Naive thymus-derived CD4-positive, alpha-beta T cell (primary cell): ENCODE measurements at regions of chr3 and their contacts with region 1.

Region 1: DNA sequence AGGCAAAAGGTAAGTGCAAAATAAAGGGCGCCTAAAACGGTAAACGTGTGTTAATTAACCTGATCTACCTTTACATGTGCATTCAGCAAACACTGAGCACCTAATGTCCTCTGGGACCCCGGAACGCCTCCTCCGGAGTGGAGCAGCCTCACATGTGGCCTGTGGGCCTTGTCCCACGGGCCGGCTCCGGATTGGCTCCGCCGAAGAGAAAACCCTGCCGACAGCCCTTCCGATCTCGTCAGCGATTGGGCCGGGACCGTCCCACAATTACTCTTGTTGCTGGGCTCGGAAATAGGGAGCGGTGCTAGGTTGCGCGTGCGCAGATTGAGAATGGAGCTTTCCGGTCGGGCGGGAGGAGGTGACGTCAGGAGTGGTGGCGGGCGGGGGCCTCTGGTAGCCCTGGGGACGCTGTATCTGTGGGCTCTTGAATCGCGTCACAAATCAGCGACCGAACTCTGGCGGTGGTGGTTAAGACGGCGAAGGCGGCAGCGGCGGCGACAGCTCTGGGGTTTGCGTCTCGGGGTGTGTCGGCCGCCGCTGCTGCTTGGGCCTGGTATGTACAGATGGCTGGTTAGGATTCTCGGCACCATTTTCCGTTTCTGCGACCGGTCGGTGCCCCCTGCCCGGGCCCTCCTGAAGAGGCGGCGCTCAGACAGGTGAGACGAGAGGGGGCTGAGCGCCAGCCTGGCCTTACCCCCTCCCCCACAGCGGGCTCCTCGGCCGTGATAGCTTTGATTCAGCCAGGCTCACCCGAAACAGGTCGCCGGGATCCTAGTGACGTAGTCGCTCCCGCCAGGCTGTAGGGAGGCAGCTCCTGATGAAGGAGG is at the start of gene SENP2:
- DNase-seq: peak; percentile 96 to 100 (median 100)
- ATAC-seq: peak; percentile 94
- H3K4me3 ChIP-seq: peak within 1 kb of the TSS; percentile 95
- H3K4me3 Mint-ChIP-seq: peak within 1 kb of the TSS; percentile 79 to 94 (median 87)
- H3K27ac ChIP-seq: peak within 1 kb of the TSS; percentile 95
- H3K27ac Mint-ChIP-seq: peak within 1 kb of the TSS; percentile 86 to 99 (median 95)
- H3K4me1 ChIP-seq: peaks cover 21 to 27% of the 10 kb centered on the region in 2 donors
- H3K4me1 Mint-ChIP-seq: peaks cover 24 to 40% (median 31%) of the 10 kb centered on the region in 7 donors
- H3K27me3 ChIP-seq: no peaks in the 10 kb centered on the region
- H3K27me3 Mint-ChIP-seq: peaks cover 0 to 5% (median 0%) of the 10 kb centered on the region in 5 donors
- total RNA-seq, gene SENP2: 30.0 to 59.2 (median 47.3) TPM

Region 2: GRCh38 chr3:184185461-184186308 is 1400.4 kb before region 1 on chr3 and contains the start of gene ABCF3:
- CTCF ChIA-PET with region 1: no interaction called
- POLR2A ChIA-PET with region 1: no interaction called
- intact Hi-C with region 1: loop called in 1 of 2 experiments (anchors 5 kb)
- DNase-seq: peak; percentile 98 to 100 (median 99)
- ATAC-seq: peak; percentile 96
- H3K4me3 ChIP-seq: peak within 1 kb of the TSS; percentile 81
- H3K4me3 Mint-ChIP-seq: peak within 1 kb of the TSS; percentile 91 to 100 (median 98)
- H3K27ac ChIP-seq: peak within 1 kb of the TSS; percentile 89
- H3K27ac Mint-ChIP-seq: peak within 1 kb of the TSS; percentile 89 to 98 (median 97)
- H3K4me1 ChIP-seq: peaks cover 18 to 24% of the 10 kb centered on the region in 2 donors
- H3K4me1 Mint-ChIP-seq: peaks cover 31 to 52% (median 43%) of the 10 kb centered on the region in 7 donors
- H3K27me3 ChIP-seq: no peaks in the 10 kb centered on the region
- H3K27me3 Mint-ChIP-seq: no peaks in the 10 kb centered on the region
- total RNA-seq, gene ABCF3: 79.3 to 153 (median 117) TPM

Region 3: DNA sequence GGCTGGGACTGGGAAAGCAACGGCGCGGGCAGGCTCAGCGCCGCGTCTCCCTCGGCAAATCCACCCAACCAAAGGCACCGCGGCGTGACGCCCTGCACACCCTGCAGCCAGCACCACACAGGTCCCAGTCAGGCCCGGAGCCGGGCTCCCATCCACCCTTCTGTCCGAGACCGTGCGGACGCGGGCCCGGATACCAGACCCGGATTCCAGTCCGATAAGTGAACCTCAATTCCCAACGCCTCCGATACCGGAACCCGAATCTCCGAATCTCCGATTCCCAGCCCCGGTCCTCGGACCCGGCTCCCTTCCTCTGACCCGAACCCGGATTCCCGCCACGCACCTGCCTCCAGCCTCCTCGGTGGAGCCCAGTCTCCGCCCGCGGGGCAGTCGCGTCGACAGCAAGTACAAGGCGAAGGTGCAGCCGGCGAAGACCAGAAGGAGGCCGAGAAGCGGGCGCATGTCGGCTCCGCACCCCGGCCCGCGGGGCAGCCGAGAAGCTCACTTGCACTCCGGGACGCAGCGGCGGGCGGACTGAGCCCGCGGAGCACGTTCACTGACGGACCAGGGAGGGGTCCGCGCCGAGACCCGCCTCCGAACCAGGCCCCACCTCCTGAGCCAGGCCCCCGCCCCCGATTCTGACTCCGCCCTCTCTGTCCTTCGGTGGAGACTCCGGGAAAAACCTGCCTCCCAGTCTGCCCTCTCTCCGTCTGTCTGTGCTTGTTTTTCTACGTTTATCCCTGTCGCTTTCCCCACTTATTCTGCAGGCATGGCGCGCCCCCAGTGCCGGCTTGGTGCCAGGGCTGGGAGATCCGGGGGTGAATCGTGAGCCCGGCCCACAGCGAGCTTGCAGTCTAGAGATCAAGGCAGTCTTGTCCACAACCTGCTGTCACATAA is 87.3 kb before region 1 on chr3 and contains the start of gene TMEM41A:
- CTCF ChIA-PET with region 1: interaction called, 4 read pairs
- POLR2A ChIA-PET with region 1: interaction called, 6 read pairs
- intact Hi-C with region 1: loop called (anchors 1 kb)
- DNase-seq: peak; percentile 80 to 94 (median 88)
- ATAC-seq: peak; percentile 99
- H3K4me3 ChIP-seq: peak within 1 kb of the TSS; percentile 93
- H3K4me3 Mint-ChIP-seq: peak within 1 kb of the TSS; percentile 87 to 98 (median 96)
- H3K27ac ChIP-seq: peak within 1 kb of the TSS; percentile 76
- H3K27ac Mint-ChIP-seq: peak within 1 kb of the TSS; percentile 87 to 95 (median 90)
- H3K4me1 ChIP-seq: peaks cover 17 to 24% of the 10 kb centered on the region in 2 donors
- H3K4me1 Mint-ChIP-seq: peaks cover 6 to 40% (median 29%) of the 10 kb centered on the region in 7 donors
- H3K27me3 ChIP-seq: no peaks in the 10 kb centered on the region
- H3K27me3 Mint-ChIP-seq: peaks cover 0 to 10% (median 0%) of the 10 kb centered on the region in 5 donors
- total RNA-seq, gene TMEM41A: 23.7 to 30.5 (median 29.1) TPM

Region 4: DNA sequence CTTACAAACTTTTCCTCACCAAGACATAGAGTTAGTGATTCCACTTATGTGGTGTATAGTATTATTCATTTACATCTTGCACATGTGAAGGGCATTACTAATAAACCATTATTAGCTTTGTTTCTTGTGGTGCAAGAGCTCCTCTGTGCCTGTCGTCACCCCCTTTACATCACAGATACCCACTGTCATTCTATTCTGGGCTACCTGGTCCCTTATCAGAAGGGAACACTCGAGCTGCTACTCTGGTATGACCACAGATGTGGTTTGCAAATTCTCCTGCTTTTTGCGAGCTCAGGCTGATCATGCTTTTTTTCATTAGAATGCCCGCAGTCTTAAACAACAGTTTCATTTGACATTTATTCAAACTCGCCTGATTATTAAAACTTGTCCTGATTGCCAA is 13.9 kb before region 1 on chr3:
- CTCF ChIA-PET with region 1: interaction called, 5 read pairs
- POLR2A ChIA-PET with region 1: interaction called, 3 read pairs
- intact Hi-C with region 1: loop called in 1 of 2 experiments (anchors 1 kb)
- DNase-seq: no peak
- ATAC-seq: no peak
- H3K4me3 ChIP-seq: no peak overlapping the region
- H3K4me3 Mint-ChIP-seq: no peak overlapping the region
- H3K27ac ChIP-seq: no peak overlapping the region
- H3K27ac Mint-ChIP-seq: no peak overlapping the region
- H3K4me1 ChIP-seq: peaks cover 0 to 5% of the 10 kb centered on the region in 2 donors
- H3K4me1 Mint-ChIP-seq: peaks cover 6 to 8% (median 6%) of the 10 kb centered on the region in 7 donors
- H3K27me3 ChIP-seq: no peaks in the 10 kb centered on the region
- H3K27me3 Mint-ChIP-seq: no peaks in the 10 kb centered on the region

Region 5: GRCh38 chr3:185824476-185825378 is 238.7 kb after region 1 on chr3 and contains the start of gene IGF2BP2:
- CTCF ChIA-PET with region 1: no interaction called
- POLR2A ChIA-PET with region 1: no interaction called
- intact Hi-C with region 1: loop called in 1 of 2 experiments (anchors 10 kb)
- DNase-seq: peak in 8 of 9 donors; percentile 11 to 65 (median 32)
- ATAC-seq: peak; percentile 81
- H3K4me3 ChIP-seq: peak within 1 kb of the TSS; percentile 41
- H3K4me3 Mint-ChIP-seq: peak within 1 kb of the TSS; percentile 71 to 93 (median 84)
- H3K27ac ChIP-seq: no peak within 1 kb of the TSS
- H3K27ac Mint-ChIP-seq: peak within 1 kb of the TSS in 1 of 9 donors; percentile 79
- H3K4me1 ChIP-seq: no peaks in the 10 kb centered on the region
- H3K4me1 Mint-ChIP-seq: peaks cover 5 to 23% (median 16%) of the 10 kb centered on the region in 7 donors
- H3K27me3 ChIP-seq: peaks cover 5 to 8% of the 10 kb centered on the region in 2 donors
- H3K27me3 Mint-ChIP-seq: peaks cover 58 to 83% (median 60%) of the 10 kb centered on the region in 5 donors
- total RNA-seq, gene IGF2BP2: 0.14 to 5.0 (median 0.87) TPM in 4 of 5 experiments, not detected in the other